A673 (cell line): ENCODE measurements at regions of chr15 and their contacts with region 1.

Region 1: DNA sequence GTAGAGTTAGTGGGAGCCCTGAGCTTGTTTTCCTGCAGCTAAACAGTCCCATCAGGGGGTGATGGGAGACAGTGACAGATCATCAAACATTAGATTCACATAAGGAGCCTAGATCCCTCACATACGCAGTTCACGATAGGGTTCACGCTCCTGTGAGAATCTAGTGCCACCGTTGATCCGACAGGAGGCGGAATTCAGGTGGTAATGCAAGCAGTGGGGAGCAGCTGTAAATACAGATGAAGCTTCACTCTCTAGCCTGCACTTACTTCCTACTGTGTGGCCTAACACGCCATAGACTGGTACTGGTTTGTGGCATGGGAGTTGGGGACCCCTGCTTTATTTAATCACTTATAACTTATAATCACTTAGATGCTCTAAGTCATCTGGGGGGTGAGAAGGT is 179.1 kb downstream of the AKAP13 start:
- DNase-seq: no peak
- H3K4me3 ChIP-seq: no peak overlapping the region
- H3K27ac ChIP-seq: no peak overlapping the region
- H3K4me1 ChIP-seq: peaks cover 10% of the 10 kb centered on the region
- H3K27me3 ChIP-seq: no peaks in the 10 kb centered on the region
- CTCF ChIP-seq: no peak

Region 2: GRCh38 chr15:84797212-84797611 is 762.3 kb before region 1 on chr15:
- CTCF ChIA-PET with region 1: interaction called, 12 read pairs
- POLR2A ChIA-PET with region 1: no interaction called
- intact Hi-C with region 1: no loop called
- DNase-seq: no peak
- H3K4me3 ChIP-seq: no peak overlapping the region
- H3K27ac ChIP-seq: no peak overlapping the region
- H3K4me1 ChIP-seq: no peaks in the 10 kb centered on the region
- H3K27me3 ChIP-seq: no peaks in the 10 kb centered on the region
- CTCF ChIP-seq: no peak

Region 3: GRCh38 chr15:85579957-85580694 is 20.6 kb after region 1 on chr15:
- CTCF ChIA-PET with region 1: no interaction called
- POLR2A ChIA-PET with region 1: interaction called, 17 read pairs
- intact Hi-C with region 1: no loop called
- DNase-seq: no peak
- H3K4me3 ChIP-seq: no peak overlapping the region
- H3K27ac ChIP-seq: no peak overlapping the region
- H3K4me1 ChIP-seq: peaks cover 13% of the 10 kb centered on the region
- H3K27me3 ChIP-seq: no peaks in the 10 kb centered on the region
- CTCF ChIP-seq: 0 out of 2 replicates have a peak, but pooled peaks have one; percentile 7